ENCODE measurements at regions of chr11 and their contacts with region 1.

Region 1: GRCh38 chr11:73982969-73983740 is 512 bp upstream of the UCP2 start:
- DNase-seq: peak; percentile 97
- CTCF ChIP-seq: no peak

Region 2: DNA sequence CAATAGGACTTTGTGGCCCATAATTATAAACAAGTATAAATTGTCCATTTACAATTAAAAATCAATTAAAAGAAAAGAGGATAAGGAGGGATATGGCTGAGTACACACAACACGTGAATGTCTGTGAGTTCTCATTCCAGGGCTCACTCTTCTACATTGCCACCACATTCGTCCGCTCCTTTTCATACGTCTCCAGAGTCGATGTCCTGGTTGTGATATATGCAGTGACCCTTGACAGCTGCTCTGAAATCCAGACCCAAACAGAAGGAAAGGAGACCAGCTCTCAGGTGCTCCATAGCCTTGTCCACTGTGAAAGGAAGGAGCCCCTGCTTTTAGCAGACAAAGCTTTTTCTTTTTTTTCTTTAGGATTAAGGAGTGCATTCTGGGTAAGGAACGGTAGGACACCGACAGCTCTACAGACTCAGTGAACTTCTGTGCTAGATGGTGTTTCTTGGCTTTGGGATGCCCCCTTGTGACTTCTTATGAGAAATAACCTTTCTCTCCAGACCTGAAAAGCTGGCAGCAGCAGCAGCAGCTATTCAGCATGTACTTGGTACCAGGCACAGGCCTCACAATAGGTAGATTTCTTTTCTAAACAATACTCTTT is 52.0 kb before region 1 on chr11:
- CTCF ChIA-PET with region 1: no interaction called
- POLR2A ChIA-PET with region 1: no interaction called
- DNase-seq: peak; percentile 39
- CTCF ChIP-seq: no peak

Region 3: DNA sequence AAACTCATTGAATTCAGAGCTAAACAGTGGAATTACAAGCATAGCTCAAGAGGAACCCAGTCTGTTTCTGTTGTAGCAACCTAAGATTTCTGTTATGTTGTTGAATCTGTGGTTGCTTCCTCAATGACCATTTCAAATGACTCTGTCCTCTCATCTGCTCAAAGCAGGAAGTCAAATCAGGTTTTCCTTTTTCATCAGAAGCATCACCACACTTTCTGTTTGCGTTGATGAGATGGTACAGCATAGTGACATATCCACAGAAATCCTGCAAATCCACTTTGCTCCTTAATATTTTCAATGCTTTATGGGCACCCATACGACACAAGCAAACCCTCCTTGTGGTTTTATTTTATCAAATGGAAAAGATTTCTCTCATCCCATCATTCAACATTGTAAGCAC is 12.1 kb after region 1 on chr11:
- CTCF ChIA-PET with region 1: interaction called, 8 read pairs
- POLR2A ChIA-PET with region 1: interaction called, 21 read pairs
- DNase-seq: no peak
- CTCF ChIP-seq: no peak

Measured in GM10248 (cell line).